ENCODE measurements at regions of chr7 and their contacts with region 1.

Region 1: DNA sequence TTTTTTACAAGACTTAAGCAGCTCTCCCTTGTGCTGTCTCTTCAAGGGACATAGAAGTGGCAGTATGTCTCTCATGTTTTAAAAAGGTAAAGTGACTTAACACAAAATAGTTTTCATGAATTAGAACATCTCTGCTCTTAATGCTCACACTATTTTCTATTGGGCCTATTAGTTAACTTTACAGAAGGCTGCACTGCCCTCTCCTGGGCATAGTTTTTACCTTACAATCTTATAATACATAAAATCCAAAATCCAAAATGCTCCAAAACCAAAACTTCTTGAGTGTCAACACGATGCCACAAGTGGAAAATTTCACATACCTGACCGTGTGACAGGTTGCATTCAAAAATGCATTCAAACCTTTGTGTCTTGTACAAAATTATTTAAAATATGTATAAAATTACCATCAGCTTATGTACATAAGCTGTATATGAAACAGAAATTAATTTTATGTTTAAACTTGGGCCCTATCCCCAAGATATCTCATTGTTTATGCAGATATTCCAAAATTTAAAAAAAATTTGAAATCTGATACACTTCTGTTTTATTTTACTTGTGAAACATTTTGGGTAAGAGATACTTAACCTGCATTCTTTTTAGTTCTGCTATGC is 25.8 kb downstream of the TES start:
- DNase-seq: no peak
- ATAC-seq: peak; percentile 65 to 76 (median 70)
- H3K4me3 ChIP-seq: no peak overlapping the region
- H3K27ac ChIP-seq: no peak overlapping the region
- H3K4me1 ChIP-seq: peaks cover 0 to 21% (median 7%) of the 10 kb centered on the region in 4 donors
- H3K27me3 ChIP-seq: no peaks in the 10 kb centered on the region
- CTCF ChIP-seq: peak; percentile 56 to 74 (median 64)
- POLR2A ChIP-seq: no peak

Region 2: DNA sequence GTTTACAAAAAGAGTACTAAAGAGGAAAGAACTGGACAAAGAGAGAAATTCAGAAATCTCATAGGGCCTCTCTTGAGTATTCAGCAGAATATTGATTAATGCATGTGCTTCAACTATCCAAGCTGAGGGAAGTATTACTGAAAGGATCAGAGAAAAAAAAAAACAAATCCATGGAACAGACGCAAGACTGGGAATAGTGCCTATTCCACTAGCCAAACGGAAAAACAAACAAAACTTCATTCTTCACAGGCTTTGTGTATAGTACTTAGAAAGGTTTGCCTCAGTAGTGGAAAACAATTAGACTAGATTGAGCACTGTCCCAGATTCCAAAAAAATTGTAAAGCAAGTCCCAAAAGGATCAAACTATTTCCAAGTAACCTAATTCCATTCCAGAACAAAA is 311.7 kb before region 1 on chr7:
- intact Hi-C with region 1: no loop called
- DNase-seq: no peak
- ATAC-seq: peak in 1 of 4 donors; percentile 81
- H3K4me3 ChIP-seq: no peak overlapping the region
- H3K27ac ChIP-seq: no peak overlapping the region
- H3K4me1 ChIP-seq: peaks cover 0 to 4% (median 0%) of the 10 kb centered on the region in 4 donors
- H3K27me3 ChIP-seq: no peaks in the 10 kb centered on the region
- CTCF ChIP-seq: no peak
- POLR2A ChIP-seq: no peak

Region 3: GRCh38 chr7:116173051-116174028 is 62.8 kb before region 1 on chr7:
- intact Hi-C with region 1: loop called in 1 of 2 experiments (anchors 5 kb)
- DNase-seq: no peak
- ATAC-seq: peak; percentile 75 to 83 (median 77)
- H3K4me3 ChIP-seq: no peak overlapping the region
- H3K27ac ChIP-seq: no peak overlapping the region
- H3K4me1 ChIP-seq: peaks cover 0 to 29% (median 0%) of the 10 kb centered on the region in 4 donors
- H3K27me3 ChIP-seq: no peaks in the 10 kb centered on the region
- CTCF ChIP-seq: peak; percentile 49 to 75 (median 64)
- POLR2A ChIP-seq: no peak

Region 4: DNA sequence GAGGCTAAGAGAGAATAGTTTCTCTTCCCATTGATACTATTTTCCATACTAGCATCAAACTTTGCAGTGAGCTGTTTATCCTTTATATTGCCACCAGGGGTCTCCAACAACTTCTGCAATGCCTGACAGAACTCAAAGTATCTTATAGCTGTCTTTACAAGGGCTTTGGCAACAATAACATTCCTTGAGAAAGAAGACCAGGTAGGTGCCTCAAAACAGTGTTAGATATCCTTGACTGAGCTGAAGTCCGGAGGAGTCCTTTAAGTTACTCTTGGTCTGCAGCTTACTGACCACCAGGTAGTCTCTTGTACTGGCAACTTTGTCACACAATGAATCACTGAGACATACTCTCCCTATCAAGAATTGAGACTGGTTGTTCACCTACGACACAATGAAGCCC is 55.8 kb before region 1 on chr7:
- intact Hi-C with region 1: loop called (anchors 5 kb)
- DNase-seq: no peak
- ATAC-seq: peak; percentile 72 to 85 (median 77)
- H3K4me3 ChIP-seq: no peak overlapping the region
- H3K27ac ChIP-seq: no peak overlapping the region
- H3K4me1 ChIP-seq: no peaks in the 10 kb centered on the region
- H3K27me3 ChIP-seq: no peaks in the 10 kb centered on the region
- CTCF ChIP-seq: peak; percentile 68 to 82 (median 76)
- POLR2A ChIP-seq: no peak

Region 5: DNA sequence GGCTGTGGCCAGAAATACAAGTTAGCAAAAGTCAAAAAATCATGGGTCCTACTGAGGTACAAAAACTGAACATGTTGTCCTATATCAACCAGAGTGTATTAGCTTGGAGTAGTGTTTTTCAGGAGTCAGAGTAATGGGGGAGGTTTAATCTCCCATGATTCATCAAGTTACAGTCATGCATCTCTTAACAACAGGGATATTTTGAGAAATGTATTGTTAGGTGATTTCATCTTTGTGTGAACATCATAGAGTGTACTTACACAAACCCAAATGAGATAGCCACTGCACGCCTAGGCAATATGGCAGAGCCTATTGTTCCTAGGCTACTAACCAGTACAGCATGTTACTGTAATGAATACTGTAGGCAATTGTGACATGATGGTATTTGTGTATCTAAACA is 40.7 kb before region 1 on chr7:
- intact Hi-C with region 1: no loop called
- DNase-seq: no peak
- ATAC-seq: no peak
- H3K4me3 ChIP-seq: no peak overlapping the region
- H3K27ac ChIP-seq: no peak overlapping the region
- H3K4me1 ChIP-seq: no peaks in the 10 kb centered on the region
- H3K27me3 ChIP-seq: no peaks in the 10 kb centered on the region
- CTCF ChIP-seq: no peak
- POLR2A ChIP-seq: no peak

Region 6: GRCh38 chr7:116455009-116455408 is 218.9 kb after region 1 on chr7:
- intact Hi-C with region 1: no loop called
- DNase-seq: no peak
- ATAC-seq: no peak
- H3K4me3 ChIP-seq: no peak overlapping the region
- H3K27ac ChIP-seq: no peak overlapping the region
- H3K4me1 ChIP-seq: no peaks in the 10 kb centered on the region
- H3K27me3 ChIP-seq: no peaks in the 10 kb centered on the region
- CTCF ChIP-seq: no peak
- POLR2A ChIP-seq: no peak